ENCODE measurements at regions of chr4 and their contacts with region 1.

Region 1: GRCh38 chr4:147160908-147161513 is 215.3 kb upstream of the TTC29 start:
- DNase-seq: peak; percentile 57

Region 2: DNA sequence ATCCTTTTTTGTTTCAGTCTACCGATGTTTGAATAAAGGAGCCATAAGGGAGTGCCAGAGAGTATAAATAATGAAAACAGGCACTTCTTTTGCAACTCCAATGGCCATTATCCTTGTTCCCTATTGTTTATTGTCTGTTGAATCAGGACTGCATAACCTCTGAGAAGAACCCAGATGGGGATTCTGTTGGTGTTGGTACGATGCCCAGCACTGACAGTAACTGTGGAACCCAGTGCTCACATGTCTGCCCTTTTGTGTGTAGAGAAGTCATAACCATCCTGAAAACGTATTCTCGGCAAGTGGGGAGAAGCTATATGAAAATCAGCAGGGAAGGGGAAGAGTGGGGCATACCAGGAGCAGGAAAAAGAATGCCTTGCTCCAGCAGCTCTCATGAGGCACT is 124.7 kb after region 1 on chr4:
- CTCF ChIA-PET with region 1: no interaction called
- POLR2A ChIA-PET with region 1: no interaction called
- DNase-seq: no peak

Region 3: GRCh38 chr4:148376151-148376550 is 1215.1 kb after region 1 on chr4:
- CTCF ChIA-PET with region 1: interaction called, 12 read pairs
- POLR2A ChIA-PET with region 1: no interaction called
- DNase-seq: no peak